CD8-positive, alpha-beta memory T cell (primary cell): ENCODE measurements at regions of chr17 and their contacts with region 1.

Region 1: DNA sequence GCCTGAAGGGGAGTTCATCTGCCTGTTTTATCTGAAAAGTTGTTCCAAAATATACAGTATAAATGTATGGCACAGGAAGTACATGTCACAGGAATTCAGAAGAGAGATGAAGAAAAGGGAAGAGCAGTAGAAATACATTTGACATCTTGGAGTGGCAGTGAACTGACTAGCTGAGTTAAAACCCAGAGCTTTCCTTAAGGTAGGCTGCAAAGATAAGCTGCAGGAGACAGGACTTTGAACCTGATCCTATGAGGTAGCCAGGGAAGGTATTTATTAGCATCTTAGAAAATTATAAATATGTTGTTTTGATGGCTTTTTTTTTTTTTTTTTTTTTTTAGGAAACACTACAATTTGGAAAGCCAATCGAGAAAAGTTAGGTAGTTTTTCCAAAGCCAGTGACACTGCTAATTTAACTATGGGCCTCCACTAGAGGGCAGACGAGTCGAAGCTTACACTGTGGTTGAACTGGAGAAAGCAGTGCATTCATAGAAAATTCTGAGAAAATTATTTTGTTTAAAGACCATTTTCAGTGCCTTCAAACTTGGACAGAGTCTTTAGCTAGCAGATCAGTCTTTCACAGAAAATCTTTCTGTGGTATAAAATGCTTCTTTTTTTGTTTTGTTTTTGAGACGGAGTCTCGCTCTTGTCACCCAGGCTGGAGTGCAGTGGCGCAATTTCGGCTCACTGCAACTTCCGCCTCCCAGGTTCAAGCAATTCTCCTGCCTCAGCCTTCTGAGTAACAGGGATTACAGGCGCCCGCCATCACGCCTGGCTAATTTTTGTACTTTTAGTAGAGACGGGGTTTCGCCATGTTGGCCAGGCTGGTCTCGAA is 122.3 kb downstream of the SSH2 start:
- DNase-seq: peak; percentile 52 to 73 (median 55)
- H3K4me3 ChIP-seq: no peak overlapping the region
- H3K4me3 Mint-ChIP-seq: no peak overlapping the region
- H3K27ac ChIP-seq: no peak overlapping the region
- H3K27ac Mint-ChIP-seq: peak overlapping the region in 1 of 8 donors; percentile 85
- H3K4me1 ChIP-seq: peaks cover 8% of the 10 kb centered on the region
- H3K4me1 Mint-ChIP-seq: peaks cover 8 to 23% (median 16%) of the 10 kb centered on the region in 3 donors
- H3K27me3 ChIP-seq: no peaks in the 10 kb centered on the region
- H3K27me3 Mint-ChIP-seq: peaks cover 0 to 1% of the 10 kb centered on the region in 2 donors

Region 2: DNA sequence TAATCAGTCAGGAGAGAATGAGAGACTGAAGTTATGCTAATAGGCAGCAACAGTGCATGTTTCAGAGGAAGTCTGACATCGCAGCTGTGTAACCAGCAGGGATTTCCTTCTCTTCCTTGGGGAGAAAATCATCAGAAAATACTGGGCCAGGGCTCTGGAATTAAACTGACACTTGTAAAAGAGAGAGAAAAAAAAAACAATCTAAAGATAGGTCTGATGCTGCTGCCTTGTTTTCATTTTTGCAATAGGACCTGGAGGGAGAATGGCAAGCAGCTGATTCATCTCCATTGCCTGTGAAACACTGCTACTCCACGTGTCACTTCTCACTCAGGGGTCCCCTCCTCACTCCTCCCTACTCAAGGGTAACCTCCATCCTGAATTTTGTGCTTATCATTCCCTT is 167.3 kb before region 1 on chr17:
- CTCF ChIA-PET with region 1: interaction called, 10 read pairs
- POLR2A ChIA-PET with region 1: no interaction called
- DNase-seq: no peak
- H3K4me3 ChIP-seq: no peak overlapping the region
- H3K4me3 Mint-ChIP-seq: peak overlapping the region in 1 of 7 donors; percentile 27
- H3K27ac ChIP-seq: no peak overlapping the region
- H3K27ac Mint-ChIP-seq: peak overlapping the region in 7 of 8 donors; percentile 3 to 76 (median 45)
- H3K4me1 ChIP-seq: no peaks in the 10 kb centered on the region
- H3K4me1 Mint-ChIP-seq: peaks cover 11 to 19% (median 12%) of the 10 kb centered on the region in 3 donors
- H3K27me3 ChIP-seq: no peaks in the 10 kb centered on the region
- H3K27me3 Mint-ChIP-seq: no peaks in the 10 kb centered on the region

Region 3: DNA sequence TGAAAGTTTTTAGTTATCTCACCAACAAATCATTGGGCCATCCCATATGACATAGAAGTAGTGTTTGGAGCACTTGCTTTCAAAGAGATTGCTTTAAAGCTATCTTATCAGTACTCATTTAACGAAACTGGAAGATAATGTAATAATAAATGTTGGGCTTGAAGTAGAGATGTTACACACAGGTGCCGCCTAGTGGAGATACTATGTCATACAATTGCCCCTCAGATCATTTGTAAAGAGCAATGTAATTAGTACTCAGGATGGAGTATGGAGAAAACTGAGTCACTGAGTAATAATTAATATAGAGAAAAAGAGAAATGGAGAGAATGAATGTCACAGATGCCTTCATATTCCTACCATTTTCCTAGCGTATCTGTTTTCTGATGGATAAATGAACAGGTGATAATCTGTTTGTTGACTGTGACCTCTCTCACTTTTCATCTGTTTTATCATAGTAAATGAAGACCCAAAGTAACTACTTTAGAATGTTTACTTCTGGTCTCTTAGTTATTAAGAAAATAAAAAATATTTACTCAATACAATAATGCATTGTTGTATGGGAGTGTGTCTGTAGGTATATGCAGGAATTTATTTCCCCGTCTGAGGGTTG is 214.1 kb after region 1 on chr17:
- CTCF ChIA-PET with region 1: interaction called, 12 read pairs
- POLR2A ChIA-PET with region 1: interaction called, 17 read pairs
- DNase-seq: peak in 3 of 5 donors; percentile 8 to 29 (median 22)
- H3K4me3 ChIP-seq: no peak overlapping the region
- H3K4me3 Mint-ChIP-seq: no peak overlapping the region
- H3K27ac ChIP-seq: no peak overlapping the region
- H3K27ac Mint-ChIP-seq: no peak overlapping the region
- H3K4me1 ChIP-seq: no peaks in the 10 kb centered on the region
- H3K4me1 Mint-ChIP-seq: no peaks in the 10 kb centered on the region
- H3K27me3 ChIP-seq: no peaks in the 10 kb centered on the region
- H3K27me3 Mint-ChIP-seq: peaks cover 4 to 16% of the 10 kb centered on the region in 2 donors